ENCODE measurements at regions of chr6 and their contacts with region 1.

Region 1: DNA sequence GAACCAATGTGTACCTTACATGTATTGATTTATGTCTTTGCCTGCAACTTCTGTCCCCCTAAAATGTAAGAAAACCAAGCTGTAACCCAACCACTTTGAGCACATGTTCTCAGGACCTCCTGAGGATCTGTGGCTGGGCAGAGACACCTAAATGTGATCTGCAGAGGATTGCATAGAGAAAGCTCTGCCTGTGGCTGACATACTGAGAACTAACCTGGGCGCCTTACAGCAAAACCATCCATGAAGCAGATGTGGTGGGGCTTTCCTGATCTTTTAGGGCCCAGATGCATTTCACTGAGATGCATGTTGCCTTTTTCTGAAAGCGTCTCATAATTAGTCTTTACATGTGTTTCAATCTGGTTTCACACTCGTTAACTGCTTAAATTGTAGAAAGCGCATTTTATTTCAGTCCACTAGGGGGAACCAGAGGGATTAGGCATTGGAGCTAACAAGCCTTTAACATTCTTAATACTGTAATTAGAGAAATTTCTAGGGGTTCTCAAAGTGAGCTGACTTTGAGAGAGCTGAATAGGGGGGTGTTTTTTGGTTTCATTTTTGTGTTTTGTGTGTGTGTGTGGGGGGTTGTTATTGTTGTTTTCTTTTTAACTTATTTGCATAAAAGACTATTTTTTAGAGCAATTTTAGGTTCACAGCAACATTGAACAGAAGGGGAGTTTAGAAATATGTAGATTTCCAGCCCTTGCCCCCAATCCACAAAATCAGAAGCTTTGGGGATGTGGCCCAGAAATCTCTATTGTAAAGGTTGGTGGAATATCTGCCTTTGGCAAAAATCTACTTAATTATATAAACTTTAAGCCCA is 50.9 kb upstream of the FAM184A start:
- DNase-seq: no peak
- ATAC-seq: peak; percentile 69
- H3K4me3 Mint-ChIP-seq: no peak overlapping the region
- H3K27ac Mint-ChIP-seq: no peak overlapping the region
- H3K4me1 Mint-ChIP-seq: no peaks in the 10 kb centered on the region
- H3K27me3 Mint-ChIP-seq: no peaks in the 10 kb centered on the region
- CTCF ChIP-seq: no peak

Region 2: DNA sequence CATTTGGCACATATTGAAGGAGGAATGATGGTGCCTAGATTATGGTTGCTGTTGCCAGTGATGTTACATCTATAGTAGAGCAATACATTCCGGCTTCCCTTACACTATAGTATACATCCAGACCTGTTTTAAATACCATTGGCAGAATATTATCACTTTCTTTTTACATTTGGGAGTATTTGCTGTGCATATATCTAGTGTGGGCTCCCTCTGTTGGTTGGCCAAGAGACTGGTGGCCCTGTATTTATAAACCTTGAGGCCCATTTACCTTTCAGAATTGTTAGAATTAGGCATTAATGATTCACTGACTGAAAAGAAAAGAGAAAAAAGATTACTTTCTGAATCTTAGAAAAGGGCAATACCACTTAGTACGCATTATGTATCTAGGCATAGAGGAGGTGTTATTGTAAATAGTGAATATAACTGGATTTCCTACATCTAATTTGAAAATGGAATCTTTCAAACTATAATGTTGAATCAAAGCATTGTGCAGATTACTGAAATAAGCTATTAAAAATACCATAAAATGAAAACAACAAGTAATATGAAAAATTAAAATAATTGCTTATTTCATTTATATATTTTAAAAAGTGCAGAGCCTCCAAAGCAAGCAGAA is 849.0 kb after region 1 on chr6:
- CTCF ChIA-PET with region 1: no interaction called
- POLR2A ChIA-PET with region 1: no interaction called
- intact Hi-C with region 1: loop called (anchors 2 kb)
- DNase-seq: no peak
- ATAC-seq: peak; percentile 52
- H3K4me3 Mint-ChIP-seq: no peak overlapping the region
- H3K27ac Mint-ChIP-seq: no peak overlapping the region
- H3K4me1 Mint-ChIP-seq: no peaks in the 10 kb centered on the region
- H3K27me3 Mint-ChIP-seq: no peaks in the 10 kb centered on the region
- CTCF ChIP-seq: peak; percentile 21

Region 3: DNA sequence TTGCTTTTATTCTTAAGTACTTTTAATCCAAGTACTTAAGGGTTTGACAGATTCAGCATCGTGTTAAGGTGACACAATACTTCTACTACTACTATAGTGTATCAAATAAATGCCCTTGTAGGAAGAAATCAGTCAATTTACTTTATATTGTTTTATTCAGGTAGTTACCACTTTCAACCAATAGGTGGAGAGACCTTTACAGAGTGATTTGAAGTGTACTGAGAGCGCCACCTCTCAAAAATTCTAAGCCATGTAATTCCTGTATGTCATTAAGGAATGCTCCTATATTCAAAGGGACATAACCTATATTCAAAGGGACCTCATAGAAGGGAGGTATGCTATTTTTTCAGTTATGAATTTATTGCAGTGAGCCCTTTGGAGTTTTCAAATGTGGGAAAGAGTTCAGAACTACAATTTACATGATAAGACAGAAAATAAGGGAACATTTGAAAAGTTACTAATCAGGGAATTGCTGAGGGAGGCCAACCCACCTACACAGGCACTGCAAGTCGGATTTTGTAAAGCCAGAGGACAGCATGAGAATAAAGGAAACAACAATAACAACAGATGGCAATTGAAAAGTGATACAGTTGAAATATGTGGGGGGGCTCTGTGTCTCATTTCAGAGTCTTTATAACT is 1249.3 kb after region 1 on chr6:
- CTCF ChIA-PET with region 1: no interaction called
- POLR2A ChIA-PET with region 1: no interaction called
- intact Hi-C with region 1: loop called (anchors 2 kb)
- DNase-seq: no peak
- ATAC-seq: peak; percentile 58
- H3K4me3 Mint-ChIP-seq: no peak overlapping the region
- H3K27ac Mint-ChIP-seq: no peak overlapping the region
- H3K4me1 Mint-ChIP-seq: no peaks in the 10 kb centered on the region
- H3K27me3 Mint-ChIP-seq: no peaks in the 10 kb centered on the region
- CTCF ChIP-seq: no peak